Calu3 (cell line): ENCODE measurements at regions of chrX and their contacts with region 1.

Region 1: DNA sequence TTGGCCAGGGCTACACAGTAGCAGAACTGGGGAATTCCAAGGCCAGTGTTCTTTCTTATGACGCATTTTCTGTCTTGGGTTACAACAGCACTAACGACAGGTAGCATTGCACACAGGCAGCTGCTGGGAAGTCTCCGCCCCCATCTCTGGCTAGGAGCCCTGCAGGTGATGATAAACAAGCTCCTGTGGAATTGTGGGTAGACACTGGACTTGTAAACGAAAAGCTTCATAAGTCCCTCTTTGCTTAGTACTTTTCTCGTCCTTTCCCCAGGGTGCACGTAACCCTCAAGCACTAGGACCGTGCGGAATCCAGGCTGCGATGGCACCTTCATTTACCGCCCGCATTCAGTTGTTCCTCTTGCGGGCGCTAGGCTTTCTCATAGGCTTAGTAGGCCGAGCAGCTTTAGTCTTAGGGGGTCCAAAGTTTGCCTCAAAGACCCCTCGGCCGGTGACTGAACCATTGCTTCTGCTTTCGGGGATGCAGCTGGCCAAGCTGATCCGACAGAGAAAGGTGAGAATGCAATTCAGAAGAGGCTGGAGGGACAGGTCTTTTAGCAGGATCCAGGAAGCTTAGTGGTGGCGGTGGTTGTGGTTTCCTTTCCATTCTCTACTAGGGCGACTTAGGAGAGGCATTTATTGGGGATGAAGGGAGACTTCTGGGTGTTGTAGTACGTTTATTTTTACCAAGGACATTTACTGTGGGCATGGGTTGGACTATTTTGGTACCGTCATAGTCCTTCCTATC is at the start of gene FAAH2:
- DNase-seq: peak; percentile 84
- H3K4me3 Mint-ChIP-seq: peak within 1 kb of the TSS; percentile 90
- H3K27ac Mint-ChIP-seq: peak within 1 kb of the TSS; percentile 92
- H3K4me1 Mint-ChIP-seq: peaks cover 11% of the 10 kb centered on the region
- H3K27me3 Mint-ChIP-seq: no peaks in the 10 kb centered on the region
- CTCF ChIP-seq: no peak
- total RNA-seq, gene FAAH2: 9.1 and 10.3 TPM in 2 replicates

Region 2: DNA sequence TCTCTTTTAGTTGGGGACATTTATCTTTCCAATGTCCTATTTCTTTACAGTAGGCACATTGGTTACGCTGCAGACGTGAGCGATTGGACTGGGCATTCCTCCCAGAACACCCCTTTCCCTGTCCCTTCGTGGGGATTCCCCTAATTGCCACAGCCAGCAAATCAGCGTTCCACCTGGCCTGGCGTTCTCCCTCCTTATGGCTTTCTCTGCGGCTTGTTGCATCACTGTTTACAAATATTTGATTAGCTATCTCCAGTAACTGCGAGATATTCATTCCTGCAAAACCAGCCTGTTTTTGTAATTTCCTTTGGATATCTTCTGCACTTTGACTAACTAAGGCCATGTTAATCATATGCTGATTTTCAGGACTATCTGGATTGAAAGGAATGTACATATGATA is 1257.0 kb before region 1 on chrX:
- CTCF ChIA-PET with region 1: no interaction called
- intact Hi-C with region 1: no loop called
- DNase-seq: peak; percentile 57
- H3K4me3 Mint-ChIP-seq: no peak overlapping the region
- H3K27ac Mint-ChIP-seq: peak overlapping the region; percentile 8
- H3K4me1 Mint-ChIP-seq: peaks cover 36% of the 10 kb centered on the region
- H3K27me3 Mint-ChIP-seq: no peaks in the 10 kb centered on the region
- CTCF ChIP-seq: no peak

Region 3: GRCh38 chrX:57453901-57454300 is 167.2 kb after region 1 on chrX:
- CTCF ChIA-PET with region 1: no interaction called
- intact Hi-C with region 1: loop called (anchors 2 kb)
- DNase-seq: no peak
- H3K4me3 Mint-ChIP-seq: no peak overlapping the region
- H3K27ac Mint-ChIP-seq: no peak overlapping the region
- H3K4me1 Mint-ChIP-seq: no peaks in the 10 kb centered on the region
- H3K27me3 Mint-ChIP-seq: no peaks in the 10 kb centered on the region
- CTCF ChIP-seq: no peak

Region 4: GRCh38 chrX:57528670-57529255 is 242.1 kb after region 1 on chrX:
- CTCF ChIA-PET with region 1: no interaction called
- intact Hi-C with region 1: loop called (anchors 5 kb)
- DNase-seq: peak; percentile 23
- H3K4me3 Mint-ChIP-seq: no peak overlapping the region
- H3K27ac Mint-ChIP-seq: no peak overlapping the region
- H3K4me1 Mint-ChIP-seq: no peaks in the 10 kb centered on the region
- H3K27me3 Mint-ChIP-seq: no peaks in the 10 kb centered on the region
- CTCF ChIP-seq: no peak

Region 5: GRCh38 chrX:57595381-57595811 is 308.7 kb after region 1 on chrX:
- CTCF ChIA-PET with region 1: no interaction called
- intact Hi-C with region 1: loop called (anchors 5 kb)
- DNase-seq: no peak
- H3K4me3 Mint-ChIP-seq: peak overlapping the region; percentile 60
- H3K27ac Mint-ChIP-seq: peak overlapping the region; percentile 4
- H3K4me1 Mint-ChIP-seq: peaks cover 27% of the 10 kb centered on the region
- H3K27me3 Mint-ChIP-seq: no peaks in the 10 kb centered on the region
- CTCF ChIP-seq: no peak